CD8-positive, alpha-beta memory T cell (primary cell): ENCODE measurements at regions of chr6 and their contacts with region 1.

Region 1: DNA sequence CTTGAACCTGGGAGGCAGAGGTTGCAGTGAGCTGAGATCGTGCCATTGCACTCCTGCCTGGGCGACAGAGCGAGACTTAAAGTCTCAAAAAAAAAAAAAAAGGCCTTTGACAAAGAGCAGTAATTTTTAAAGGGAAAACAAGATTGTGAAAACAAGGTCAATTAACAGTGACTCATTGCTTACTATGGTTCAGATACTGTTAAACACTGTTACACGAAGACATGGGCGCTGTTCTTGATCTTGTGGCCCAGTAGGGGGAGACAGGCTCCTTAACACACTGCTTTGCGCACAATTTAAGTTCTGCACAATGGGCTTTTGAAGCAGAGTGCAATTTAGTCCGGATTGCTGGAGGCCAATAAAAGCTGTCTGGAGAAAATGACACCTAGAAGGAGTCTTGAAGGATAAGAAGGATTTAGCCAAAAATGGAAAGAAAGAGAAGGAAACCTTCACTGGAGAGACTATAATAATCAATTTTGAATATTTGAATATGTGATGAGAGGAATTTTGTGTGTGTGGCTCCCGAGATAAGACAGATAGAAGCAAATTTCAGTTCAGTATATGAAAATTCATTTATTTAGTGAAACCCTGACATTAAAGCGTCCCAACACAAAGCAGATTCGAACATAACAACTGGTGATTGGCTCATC is 6.0 kb upstream of the LATS1 start:
- DNase-seq: peak in 3 of 5 donors; percentile 14 to 58 (median 36)
- H3K4me3 ChIP-seq: no peak overlapping the region
- H3K4me3 Mint-ChIP-seq: no peak overlapping the region
- H3K27ac ChIP-seq: no peak overlapping the region
- H3K27ac Mint-ChIP-seq: peak overlapping the region in 1 of 8 donors; percentile 7
- H3K4me1 ChIP-seq: peaks cover 7% of the 10 kb centered on the region
- H3K4me1 Mint-ChIP-seq: peaks cover 15 to 21% (median 20%) of the 10 kb centered on the region in 3 donors
- H3K27me3 ChIP-seq: no peaks in the 10 kb centered on the region
- H3K27me3 Mint-ChIP-seq: no peaks in the 10 kb centered on the region

Region 2: DNA sequence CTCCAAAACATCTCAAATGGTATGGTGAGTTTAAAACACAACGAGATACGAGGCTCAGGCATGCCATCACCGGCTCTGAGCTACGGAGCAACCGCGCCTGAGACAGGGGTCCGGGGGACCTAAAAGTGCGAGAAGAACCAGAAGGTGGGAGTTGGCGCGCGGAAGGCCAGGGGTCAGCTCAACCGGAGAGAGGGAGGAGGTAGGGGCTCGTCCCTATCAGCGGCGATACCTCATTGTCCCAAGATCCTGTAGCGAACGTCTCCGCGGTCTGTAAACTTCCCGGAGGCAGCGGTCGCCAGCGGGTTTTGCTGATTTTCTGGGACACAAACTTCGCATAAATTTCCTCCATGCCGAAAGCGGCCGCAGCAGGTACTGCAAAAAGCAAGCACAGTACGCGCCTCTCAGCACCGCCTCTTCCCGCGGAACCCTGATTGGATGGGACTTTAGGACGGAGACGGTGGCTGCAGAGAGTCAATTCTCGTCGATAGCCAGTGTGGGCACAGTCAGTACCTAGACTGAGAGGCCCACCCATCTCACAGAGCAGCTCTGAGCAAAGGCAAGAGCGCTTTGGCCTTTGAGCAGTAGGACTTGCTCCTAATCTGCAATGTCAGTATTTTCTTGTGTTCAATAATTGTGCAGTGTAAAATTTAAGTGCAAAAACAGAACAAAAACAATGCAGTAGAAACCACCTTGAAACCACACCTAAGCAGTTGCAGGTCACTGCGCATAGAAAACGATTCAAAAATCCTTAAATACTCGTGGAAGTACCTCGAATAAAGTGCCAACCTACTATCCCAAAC is 22.5 kb after region 1 on chr6 and contains the start of gene NUP43:
- CTCF ChIA-PET with region 1: interaction called, 16 read pairs
- POLR2A ChIA-PET with region 1: interaction called, 3 read pairs
- DNase-seq: peak; percentile 80 to 94 (median 87)
- H3K4me3 ChIP-seq: peak within 1 kb of the TSS; percentile 65
- H3K4me3 Mint-ChIP-seq: peak within 1 kb of the TSS; percentile 94 to 99 (median 95)
- H3K27ac ChIP-seq: peak within 1 kb of the TSS; percentile 70
- H3K27ac Mint-ChIP-seq: peak within 1 kb of the TSS; percentile 83 to 100 (median 92)
- H3K4me1 ChIP-seq: peaks cover 29% of the 10 kb centered on the region
- H3K4me1 Mint-ChIP-seq: peaks cover 28 to 42% (median 35%) of the 10 kb centered on the region in 3 donors
- H3K27me3 ChIP-seq: no peaks in the 10 kb centered on the region
- H3K27me3 Mint-ChIP-seq: peaks cover 0 to 4% of the 10 kb centered on the region in 2 donors
- total RNA-seq, gene NUP43: 82.3 to 86.2 TPM